ENCODE measurements at regions of chr5 and their contacts with region 1.

Region 1: GRCh38 chr5:174311531-174312269 is 266.2 kb downstream of the NSG2 start:
- DNase-seq: peak; percentile 72 to 97 (median 83)

Region 2: GRCh38 chr5:173972925-173973615 is 338.6 kb before region 1 on chr5:
- intact Hi-C with region 1: loop called (anchors 5 kb)
- DNase-seq: peak; percentile 75 to 97 (median 89)

Region 3: GRCh38 chr5:174045470-174046025 is 266.2 kb before region 1 on chr5 and contains the start of gene NSG2:
- intact Hi-C with region 1: loop called (anchors 1 kb)
- DNase-seq: peak; percentile 78 to 99 (median 91)

Region 4: DNA sequence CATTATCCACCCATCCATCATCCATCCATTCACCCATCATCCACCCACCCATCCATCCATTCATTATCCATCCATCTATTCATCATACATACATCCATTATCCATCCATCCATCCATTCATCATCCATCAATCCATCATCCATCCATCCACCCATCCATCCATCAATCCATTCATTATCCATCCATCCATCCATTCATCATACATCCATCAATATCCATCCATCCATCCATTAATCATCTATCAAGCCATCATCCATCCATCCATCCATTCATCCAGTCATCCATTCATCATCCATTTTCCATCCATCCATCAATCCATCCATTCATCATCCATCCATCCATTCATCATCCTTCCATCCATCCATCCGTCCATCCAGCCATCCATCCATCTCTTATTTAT is 177.1 kb before region 1 on chr5:
- intact Hi-C with region 1: no loop called
- DNase-seq: no peak

Region 5: GRCh38 chr5:174175716-174176268 is 135.9 kb before region 1 on chr5:
- intact Hi-C with region 1: loop called (anchors 5 kb)
- DNase-seq: peak in 1 of 10 donors; percentile 25

Region 6: GRCh38 chr5:174204535-174205313 is 107.0 kb before region 1 on chr5:
- intact Hi-C with region 1: no loop called
- DNase-seq: no peak

Measured in posterior cingulate gyrus (tissue), 11 donors.